Activated B cell treated with CpG ODN at 0.5 μM for 24 hours (primary cell): ENCODE measurements at regions of chr1 and their contacts with region 1.

Region 1: GRCh38 chr1:55987491-55988249 is 591.7 kb downstream of the PLPP3 start:
- DNase-seq: no peak
- ATAC-seq: no peak
- H3K4me3 Mint-ChIP-seq: no peak overlapping the region
- H3K27ac Mint-ChIP-seq: no peak overlapping the region
- H3K4me1 Mint-ChIP-seq: no peaks in the 10 kb centered on the region
- H3K27me3 Mint-ChIP-seq: no peaks in the 10 kb centered on the region
- CTCF ChIP-seq: no peak

Region 2: DNA sequence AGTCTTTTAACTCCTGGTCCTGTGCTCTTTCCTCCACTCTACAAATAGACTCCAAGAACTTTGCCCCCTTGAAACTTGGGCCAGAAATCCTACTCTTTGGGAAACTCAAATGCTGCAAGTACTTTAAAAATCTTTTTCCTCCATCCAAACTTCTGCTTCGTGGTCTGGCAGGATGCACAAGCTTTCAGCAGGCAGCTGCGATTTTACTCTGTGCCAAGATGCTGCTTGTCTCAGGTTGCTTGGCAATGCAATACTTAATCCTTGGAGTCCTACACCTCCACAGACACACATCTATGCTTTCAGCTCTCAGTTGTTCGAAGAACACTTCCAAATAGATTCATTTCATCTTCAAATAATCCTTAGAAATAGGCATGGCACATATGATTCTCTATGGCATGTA is 337.2 kb before region 1 on chr1:
- CTCF ChIA-PET with region 1: no interaction called
- POLR2A ChIA-PET with region 1: no interaction called
- intact Hi-C with region 1: no loop called
- DNase-seq: no peak
- ATAC-seq: no peak
- H3K4me3 Mint-ChIP-seq: no peak overlapping the region
- H3K27ac Mint-ChIP-seq: no peak overlapping the region
- H3K4me1 Mint-ChIP-seq: no peaks in the 10 kb centered on the region
- H3K27me3 Mint-ChIP-seq: no peaks in the 10 kb centered on the region
- CTCF ChIP-seq: no peak

Region 3: GRCh38 chr1:55974714-55975511 is 12.8 kb before region 1 on chr1:
- CTCF ChIA-PET with region 1: no interaction called
- POLR2A ChIA-PET with region 1: no interaction called
- intact Hi-C with region 1: loop called (anchors 1 kb)
- DNase-seq: no peak
- ATAC-seq: no peak
- H3K4me3 Mint-ChIP-seq: no peak overlapping the region
- H3K27ac Mint-ChIP-seq: no peak overlapping the region
- H3K4me1 Mint-ChIP-seq: no peaks in the 10 kb centered on the region
- H3K27me3 Mint-ChIP-seq: peaks cover 10% of the 10 kb centered on the region
- CTCF ChIP-seq: no peak

Region 4: GRCh38 chr1:56227886-56228285 is 240.2 kb after region 1 on chr1:
- CTCF ChIA-PET with region 1: no interaction called
- POLR2A ChIA-PET with region 1: no interaction called
- intact Hi-C with region 1: no loop called
- DNase-seq: no peak
- ATAC-seq: no peak
- H3K4me3 Mint-ChIP-seq: no peak overlapping the region
- H3K27ac Mint-ChIP-seq: no peak overlapping the region
- H3K4me1 Mint-ChIP-seq: no peaks in the 10 kb centered on the region
- H3K27me3 Mint-ChIP-seq: no peaks in the 10 kb centered on the region
- CTCF ChIP-seq: no peak

Region 5: GRCh38 chr1:57576756-57577155 is 1589.1 kb after region 1 on chr1:
- CTCF ChIA-PET with region 1: no interaction called
- POLR2A ChIA-PET with region 1: no interaction called
- intact Hi-C with region 1: no loop called
- DNase-seq: no peak
- ATAC-seq: no peak
- H3K4me3 Mint-ChIP-seq: no peak overlapping the region
- H3K27ac Mint-ChIP-seq: no peak overlapping the region
- H3K4me1 Mint-ChIP-seq: no peaks in the 10 kb centered on the region
- H3K27me3 Mint-ChIP-seq: no peaks in the 10 kb centered on the region
- CTCF ChIP-seq: no peak